PC-9 (cell line): ENCODE measurements at regions of chr1 and their contacts with region 1.

Region 1: GRCh38 chr1:22641906-22642636 is 1.4 kb upstream of the C1QC start:
- DNase-seq: peak in 1 of 2 experiments; percentile 73
- H3K4me3 ChIP-seq: no peak overlapping the region
- H3K27ac ChIP-seq: no peak overlapping the region
- H3K4me1 ChIP-seq: peaks cover 13% of the 10 kb centered on the region
- H3K27me3 ChIP-seq: 0 out of 2 replicates have a peak, but pooled peaks cover under 1% of the 10 kb centered on the region
- CTCF ChIP-seq: peak; percentile 85

Region 2: GRCh38 chr1:21232044-21232443 is 1410.0 kb before region 1 on chr1:
- CTCF ChIA-PET with region 1: no interaction called
- POLR2A ChIA-PET with region 1: no interaction called
- intact Hi-C with region 1: loop called (anchors 10 kb)
- DNase-seq: peak in 1 of 2 experiments; percentile 27
- H3K4me3 ChIP-seq: no peak overlapping the region
- H3K27ac ChIP-seq: no peak overlapping the region
- H3K4me1 ChIP-seq: no peaks in the 10 kb centered on the region
- H3K27me3 ChIP-seq: no peaks in the 10 kb centered on the region
- CTCF ChIP-seq: peak; percentile 79

Region 3: DNA sequence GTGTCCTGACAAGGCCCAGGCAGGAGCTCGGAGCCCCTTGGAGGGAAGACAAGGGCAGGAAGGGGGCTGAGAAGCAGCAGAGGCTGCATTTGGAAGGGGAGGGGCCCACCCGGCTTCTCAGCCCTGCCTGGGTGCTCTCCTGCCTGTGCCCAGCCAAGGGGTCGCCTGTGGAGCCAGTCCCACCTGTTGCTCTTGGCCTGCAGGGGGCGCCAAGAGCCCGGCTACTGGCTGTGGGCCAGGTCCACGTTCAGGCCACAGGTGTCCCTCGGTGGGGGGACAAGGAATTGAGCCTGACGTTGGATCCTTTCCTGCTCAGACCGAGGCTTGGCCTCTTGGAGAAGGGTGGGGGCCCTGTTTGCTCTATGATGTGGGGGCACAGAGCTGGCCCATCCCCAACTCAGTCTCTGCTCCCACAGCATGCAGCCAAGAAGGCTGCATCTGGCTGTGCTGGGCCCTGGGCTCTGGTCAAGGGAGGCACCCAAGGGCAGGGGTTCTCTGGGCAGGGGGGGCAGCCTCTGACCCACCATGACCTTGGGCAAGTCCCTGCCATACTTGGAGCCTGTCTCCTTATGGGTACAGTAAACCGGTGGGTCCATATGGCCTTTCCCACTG is 510.1 kb before region 1 on chr1:
- CTCF ChIA-PET with region 1: no interaction called
- POLR2A ChIA-PET with region 1: no interaction called
- intact Hi-C with region 1: loop called (anchors 10 kb)
- DNase-seq: peak in 1 of 2 experiments; percentile 68
- H3K4me3 ChIP-seq: no peak overlapping the region
- H3K27ac ChIP-seq: no peak overlapping the region
- H3K4me1 ChIP-seq: peaks cover 10% of the 10 kb centered on the region
- H3K27me3 ChIP-seq: no peaks in the 10 kb centered on the region
- CTCF ChIP-seq: peak; percentile 89

Region 4: DNA sequence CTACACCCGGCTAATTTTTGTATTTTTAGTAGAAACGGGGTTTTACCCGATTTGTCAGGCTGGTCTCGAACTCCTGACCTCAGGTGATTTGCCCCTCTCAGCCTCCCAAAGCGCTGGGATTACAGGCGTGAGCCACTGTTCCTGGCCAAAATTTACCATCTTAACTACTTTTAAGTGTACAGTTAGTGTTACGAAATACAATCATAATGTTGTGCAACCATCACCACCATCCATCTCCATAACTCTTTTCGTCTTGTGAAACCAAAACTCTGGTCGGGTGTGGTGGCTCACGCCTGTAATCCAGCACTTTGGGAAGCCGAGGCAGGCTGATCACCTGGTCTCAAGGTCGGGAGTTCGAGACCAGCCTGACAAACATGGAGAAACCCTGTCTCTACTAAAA is 204.5 kb before region 1 on chr1:
- CTCF ChIA-PET with region 1: no interaction called
- POLR2A ChIA-PET with region 1: no interaction called
- intact Hi-C with region 1: no loop called
- DNase-seq: no peak
- H3K4me3 ChIP-seq: no peak overlapping the region
- H3K27ac ChIP-seq: no peak overlapping the region
- H3K4me1 ChIP-seq: no peaks in the 10 kb centered on the region
- H3K27me3 ChIP-seq: no peaks in the 10 kb centered on the region
- CTCF ChIP-seq: no peak

Region 5: GRCh38 chr1:22518379-22518778 is 123.7 kb before region 1 on chr1:
- CTCF ChIA-PET with region 1: interaction called, 11 read pairs
- POLR2A ChIA-PET with region 1: no interaction called
- intact Hi-C with region 1: no loop called
- DNase-seq: no peak
- H3K4me3 ChIP-seq: no peak overlapping the region
- H3K27ac ChIP-seq: no peak overlapping the region
- H3K4me1 ChIP-seq: no peaks in the 10 kb centered on the region
- H3K27me3 ChIP-seq: no peaks in the 10 kb centered on the region
- CTCF ChIP-seq: no peak

Region 6: DNA sequence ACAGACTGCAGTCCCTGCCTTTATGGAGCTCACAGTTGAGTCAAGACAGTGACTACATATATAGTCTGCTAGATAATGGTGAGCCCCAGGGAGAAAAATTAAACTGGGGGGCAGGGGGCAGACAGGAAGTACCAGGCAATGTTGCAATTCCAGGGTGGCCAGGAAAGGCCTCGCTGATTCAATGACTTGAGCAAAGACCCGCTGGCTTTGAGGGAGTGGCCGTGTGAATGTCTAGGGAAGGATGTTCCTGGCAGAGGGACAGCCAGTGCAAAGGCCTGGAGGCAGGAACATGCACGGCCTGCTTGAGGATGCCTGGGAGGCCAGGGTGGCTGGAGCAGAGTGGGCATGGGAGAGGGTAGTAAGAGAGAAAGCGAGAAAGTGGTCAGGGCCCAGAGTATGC is 101.7 kb before region 1 on chr1:
- CTCF ChIA-PET with region 1: interaction called, 4 read pairs
- POLR2A ChIA-PET with region 1: no interaction called
- intact Hi-C with region 1: loop called (anchors 5 kb)
- DNase-seq: no peak
- H3K4me3 ChIP-seq: no peak overlapping the region
- H3K27ac ChIP-seq: no peak overlapping the region
- H3K4me1 ChIP-seq: no peaks in the 10 kb centered on the region
- H3K27me3 ChIP-seq: peaks cover under 1% of the 10 kb centered on the region; the same call in 1 of the 2 replicates
- CTCF ChIP-seq: no peak